ENCODE measurements at regions of chr16 and their contacts with region 1.

Region 1: DNA sequence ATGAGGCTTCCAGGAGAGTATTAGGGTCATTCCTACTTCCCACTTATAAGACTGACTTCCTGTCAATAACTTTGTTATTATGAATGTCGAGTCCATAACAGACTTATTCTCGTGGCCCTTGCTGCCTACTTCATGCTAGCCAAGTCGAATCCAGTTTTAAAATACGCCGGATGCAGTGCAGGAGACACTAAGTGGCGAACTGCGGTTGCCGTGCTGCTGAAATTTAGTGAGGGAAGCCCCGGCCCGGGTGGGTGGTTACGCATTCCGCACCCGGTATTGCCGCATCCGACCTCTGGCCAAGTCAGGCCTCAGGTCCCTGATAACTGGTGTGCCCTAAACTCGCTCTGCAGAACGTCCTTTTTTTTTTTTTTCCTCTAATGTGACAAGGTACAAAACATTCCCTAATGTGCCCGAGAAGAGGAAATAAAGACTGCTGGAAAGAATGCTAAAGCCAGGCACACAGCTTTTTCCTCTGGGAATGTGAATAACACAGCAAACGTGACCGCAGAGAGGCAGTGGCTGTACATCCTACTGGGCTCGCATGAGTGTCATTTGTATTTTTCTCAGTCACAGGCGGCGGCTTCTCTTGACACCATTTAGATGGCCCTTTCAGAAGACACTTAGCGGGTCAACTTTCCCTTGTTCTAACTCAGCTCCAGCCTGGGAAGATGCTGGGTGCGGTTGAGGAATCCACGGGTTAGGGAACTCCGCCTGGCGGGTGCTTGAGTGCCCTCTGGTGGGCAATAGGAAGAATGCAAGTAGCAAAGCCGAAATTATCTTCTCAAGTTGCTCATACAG is 7.1 kb upstream of the AKTIP start:
- DNase-seq: peak; percentile 70 to 77 (median 76)
- ATAC-seq: peak; percentile 82
- H3K4me3 ChIP-seq: no peak overlapping the region
- H3K27ac ChIP-seq: no peak overlapping the region
- H3K4me1 ChIP-seq: peaks cover 0 to 4% of the 10 kb centered on the region in 2 experiments; a peak in 2 of 5 replicates
- H3K27me3 ChIP-seq: no peaks in the 10 kb centered on the region; a peak in 3 of 5 replicates
- CTCF ChIP-seq: peak; percentile 74 to 86 (median 85)
- EP300 ChIP-seq: no peak
- POLR2A ChIP-seq: no peak
- RAD21 ChIP-seq: peak; percentile 60 to 81; a peak in 3 of 4 replicates

Region 2: DNA sequence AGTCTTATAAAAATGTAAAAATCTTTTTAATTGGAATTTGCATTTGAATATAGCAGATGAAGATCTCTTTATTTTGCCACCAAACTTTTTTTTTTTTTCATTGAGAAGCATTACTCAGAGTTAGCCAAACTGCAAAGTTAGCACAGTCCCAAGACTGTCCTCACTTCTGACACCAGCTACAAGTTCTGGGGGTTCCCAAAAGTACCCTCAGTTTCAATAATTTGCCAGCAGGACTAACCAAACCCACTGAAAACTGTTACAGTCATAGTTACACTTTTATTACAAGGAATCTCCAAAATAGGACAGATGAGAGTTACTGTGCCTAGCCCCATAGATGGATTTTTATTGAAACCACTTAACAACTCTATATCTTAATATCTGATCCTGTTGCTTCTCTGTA is 311.2 kb before region 1 on chr16:
- CTCF ChIA-PET with region 1: no interaction called
- POLR2A ChIA-PET with region 1: no interaction called
- in situ Hi-C with region 1: no loop called
- intact Hi-C with region 1: no loop called
- DNase-seq: no peak
- ATAC-seq: no peak
- H3K4me3 ChIP-seq: no peak overlapping the region
- H3K27ac ChIP-seq: no peak overlapping the region
- H3K4me1 ChIP-seq: no peaks in the 10 kb centered on the region
- H3K27me3 ChIP-seq: no peaks in the 10 kb centered on the region
- CTCF ChIP-seq: no peak
- EP300 ChIP-seq: no peak
- POLR2A ChIP-seq: no peak
- RAD21 ChIP-seq: no peak

Region 3: DNA sequence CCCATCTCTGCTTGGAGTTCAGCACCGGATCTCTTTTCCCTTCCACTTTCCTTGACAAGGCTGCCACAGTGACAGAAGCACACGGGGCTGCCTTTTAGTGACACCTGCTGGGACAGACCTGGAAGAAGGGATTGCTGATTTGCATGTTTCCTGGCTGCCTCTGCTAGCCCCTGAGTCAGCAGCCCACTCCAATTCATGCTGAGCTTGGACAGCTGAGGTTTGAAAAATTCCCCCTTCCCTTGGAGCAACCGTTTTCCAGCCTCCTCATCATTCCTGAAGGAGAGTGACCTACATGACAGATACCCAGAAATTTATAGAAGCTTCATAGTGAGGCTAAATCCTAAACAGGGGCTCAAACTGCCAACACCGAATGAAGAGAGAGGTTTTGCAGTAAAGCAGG is 94.6 kb before region 1 on chr16:
- CTCF ChIA-PET with region 1: no interaction called
- POLR2A ChIA-PET with region 1: no interaction called
- in situ Hi-C with region 1: no loop called
- intact Hi-C with region 1: loop called (anchors 5 kb)
- DNase-seq: peak in 1 of 4 experiments; percentile 23
- ATAC-seq: 0 out of 3 replicates have a peak, but pooled peaks have one; percentile 40
- H3K4me3 ChIP-seq: no peak overlapping the region
- H3K27ac ChIP-seq: no peak overlapping the region
- H3K4me1 ChIP-seq: peaks cover 0 to 7% of the 10 kb centered on the region in 2 experiments; a peak in 2 of 5 replicates
- H3K27me3 ChIP-seq: peaks cover 4 to 12% of the 10 kb centered on the region in 2 experiments; a peak in 3 of 5 replicates
- CTCF ChIP-seq: peak; percentile 16 to 24 (median 21); a peak in 1 of 6 replicates
- EP300 ChIP-seq: no peak
- POLR2A ChIP-seq: no peak
- RAD21 ChIP-seq: peak in 1 of 2 experiments; percentile 39; a peak in 2 of 4 replicates